Activated CD4-positive, alpha-beta T cell treated with anti-CD3 and anti-CD28 coated beads for 36 hours (primary cell): ENCODE measurements at regions of chr3 and their contacts with region 1.

Region 1: GRCh38 chr3:106534206-106534605 is 665.4 kb upstream of the CBLB start:
- DNase-seq: peak; percentile 74
- ATAC-seq: peak; percentile 93
- H3K4me3 Mint-ChIP-seq: no peak overlapping the region
- H3K27ac Mint-ChIP-seq: peak overlapping the region; percentile 30
- H3K4me1 Mint-ChIP-seq: peaks cover 26% of the 10 kb centered on the region
- H3K27me3 Mint-ChIP-seq: peaks cover 2% of the 10 kb centered on the region

Region 2: DNA sequence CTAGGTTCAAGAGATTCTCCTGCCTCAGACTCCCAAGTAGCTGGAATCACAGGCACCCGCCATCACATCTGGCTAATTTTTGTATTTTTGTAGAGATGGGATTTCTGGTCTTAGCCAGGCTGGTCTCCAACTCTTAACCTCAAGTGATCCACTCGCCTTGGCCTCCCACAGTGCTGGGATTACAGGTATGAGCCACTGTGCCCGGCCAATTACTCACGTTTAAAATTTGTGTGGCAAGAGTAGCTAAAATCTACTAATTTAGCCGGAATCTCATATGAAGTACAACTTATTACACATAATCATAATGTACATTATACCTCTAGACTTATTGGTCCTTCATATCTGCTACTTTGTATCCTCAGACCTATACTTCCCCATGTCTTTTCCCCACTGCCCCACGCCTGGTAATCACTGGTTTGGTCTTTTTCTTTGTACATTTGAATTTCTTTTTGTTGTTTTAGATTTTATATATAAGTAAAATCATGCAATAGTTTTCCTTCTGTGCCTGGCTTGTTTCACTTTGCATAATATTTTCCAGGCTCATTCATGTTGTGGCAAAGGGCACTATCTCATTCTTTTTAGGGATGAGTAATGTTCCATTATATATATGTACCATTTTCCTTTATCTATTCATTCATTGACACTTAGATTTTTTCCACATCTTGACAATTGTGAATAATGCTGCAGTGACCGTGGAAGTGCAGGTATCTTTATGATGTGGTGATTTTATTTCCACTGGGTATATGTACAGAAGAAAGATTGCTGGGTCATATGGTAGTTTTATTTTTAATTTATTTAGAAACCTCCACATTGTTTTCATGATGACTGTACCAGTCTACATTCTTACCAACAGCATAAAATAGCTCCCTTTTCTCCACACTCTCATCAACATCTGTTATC is 60.4 kb before region 1 on chr3:
- CTCF ChIA-PET with region 1: no interaction called
- POLR2A ChIA-PET with region 1: no interaction called
- intact Hi-C with region 1: loop called (anchors 1 to 2 kb)
- DNase-seq: peak; percentile 47
- ATAC-seq: peak; percentile 86
- H3K4me3 Mint-ChIP-seq: no peak overlapping the region
- H3K27ac Mint-ChIP-seq: peak overlapping the region; percentile 88
- H3K4me1 Mint-ChIP-seq: peaks cover 28% of the 10 kb centered on the region
- H3K27me3 Mint-ChIP-seq: no peaks in the 10 kb centered on the region

Region 3: DNA sequence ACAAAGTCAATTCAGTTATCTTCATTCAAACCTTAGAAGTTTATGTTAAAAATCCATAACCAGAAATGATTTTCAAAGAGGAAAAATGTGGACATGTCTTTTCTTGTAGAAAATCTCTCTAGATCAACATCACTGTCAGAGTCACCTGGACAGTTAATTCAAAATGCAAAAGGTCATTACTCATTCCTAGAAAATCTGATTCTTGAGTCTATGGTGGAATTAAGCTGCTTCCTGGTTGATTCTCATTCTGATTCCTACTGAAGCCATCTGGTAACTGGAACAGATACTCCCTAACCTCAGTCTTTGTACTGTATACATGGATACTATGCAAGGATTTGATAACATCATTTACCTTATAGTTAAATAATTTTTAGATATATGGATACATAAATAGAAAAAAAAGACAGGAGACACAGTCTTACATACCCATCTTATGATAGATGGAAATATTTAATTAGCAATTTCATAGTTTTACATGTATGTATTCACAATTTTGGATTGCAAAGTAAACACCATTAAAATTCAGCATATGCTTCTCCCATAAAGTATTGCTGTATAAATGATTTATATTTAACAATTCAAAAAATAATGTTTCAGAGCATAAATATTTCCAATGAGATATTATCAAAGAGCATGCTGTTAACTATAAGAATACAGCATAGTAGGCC is 149.9 kb after region 1 on chr3:
- CTCF ChIA-PET with region 1: no interaction called
- POLR2A ChIA-PET with region 1: no interaction called
- intact Hi-C with region 1: no loop called
- DNase-seq: no peak
- ATAC-seq: no peak
- H3K4me3 Mint-ChIP-seq: no peak overlapping the region
- H3K27ac Mint-ChIP-seq: no peak overlapping the region
- H3K4me1 Mint-ChIP-seq: no peaks in the 10 kb centered on the region
- H3K27me3 Mint-ChIP-seq: peaks cover 8% of the 10 kb centered on the region